ENCODE measurements at regions of chr3 and their contacts with region 1.

Region 1: DNA sequence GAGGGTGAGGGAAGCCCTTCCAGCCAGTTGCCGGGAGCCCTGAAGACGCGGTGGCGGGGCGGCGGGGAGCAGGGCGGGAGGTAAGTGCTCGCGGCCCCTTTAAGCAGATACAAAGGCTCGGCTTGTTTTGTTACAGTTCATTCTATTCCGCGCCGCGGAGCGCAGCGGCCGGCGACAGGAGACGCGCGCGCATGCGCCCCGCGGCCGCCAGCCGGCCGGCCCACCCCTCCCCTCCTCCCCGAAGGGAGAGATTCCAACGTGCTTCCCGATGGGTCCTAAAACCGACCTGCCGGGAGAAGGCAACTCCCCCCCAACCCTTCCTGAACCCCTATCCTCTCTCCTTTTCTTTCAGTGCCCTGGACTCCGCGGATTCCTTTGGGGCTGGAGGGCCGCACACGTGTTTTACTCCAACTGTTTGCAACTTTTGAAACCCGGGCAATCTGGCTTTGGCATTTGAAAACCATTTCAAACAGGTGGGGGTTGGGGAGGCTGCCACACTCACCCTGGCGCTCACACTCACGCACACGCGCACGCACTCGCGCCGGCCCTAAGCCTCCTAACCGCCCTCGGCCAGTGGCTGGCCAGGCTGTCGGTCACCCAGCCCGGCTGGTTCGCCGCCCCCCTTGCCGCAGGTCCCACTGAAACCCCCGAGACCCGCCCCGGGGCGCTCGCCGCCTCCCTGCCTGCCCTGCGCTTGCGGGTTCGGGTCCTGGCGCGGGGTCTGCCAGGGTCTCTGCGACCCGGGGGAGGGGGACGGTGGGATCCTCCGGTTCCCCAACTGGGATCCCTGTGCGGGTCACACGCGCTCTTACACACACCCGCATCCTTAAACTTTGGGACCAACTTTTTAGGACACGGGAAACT is at the start of gene MAGI1:
- DNase-seq: peak; percentile 91
- ATAC-seq: peak; percentile 91 to 92
- total RNA-seq, gene MAGI1: 27.7 to 30.0 TPM

Region 2: DNA sequence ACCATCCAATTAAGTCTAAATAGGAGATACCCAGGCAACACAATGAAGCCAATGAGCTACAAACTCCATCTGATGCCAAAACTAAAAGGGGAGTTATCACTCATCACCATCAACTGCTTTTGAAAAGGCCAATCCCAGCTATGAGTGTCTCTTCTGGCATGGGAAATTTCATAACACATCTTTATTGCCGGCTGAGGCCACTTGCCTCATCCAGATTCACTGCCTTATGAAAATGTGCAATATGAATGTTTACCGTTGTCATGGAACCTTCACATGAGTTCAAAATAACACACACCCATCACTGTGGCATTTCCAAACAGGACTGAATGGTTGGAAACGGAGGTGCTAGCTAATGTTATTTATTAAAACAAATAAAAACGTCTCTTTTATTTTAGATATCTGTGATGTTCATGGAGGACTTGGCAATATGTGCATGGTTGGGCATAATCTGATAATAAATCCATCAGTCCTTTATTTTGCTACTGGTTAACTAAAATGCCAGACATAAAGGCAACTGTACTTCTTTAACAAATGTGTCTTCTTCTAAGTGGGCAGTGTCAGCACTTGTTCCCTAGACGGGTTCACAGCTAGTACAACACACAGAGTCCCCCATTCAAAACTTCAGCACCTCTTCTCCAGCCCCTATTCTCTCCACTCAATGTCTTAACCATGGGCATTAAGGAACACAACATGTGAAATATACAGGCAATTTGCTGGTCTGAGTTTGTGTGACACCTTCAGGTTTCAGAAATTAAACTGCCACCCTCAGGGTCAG is 144.1 kb before region 1 on chr3:
- intact Hi-C with region 1: loop called in 1 of 2 experiments (anchors 10 kb)
- DNase-seq: no peak
- ATAC-seq: peak; percentile 72 to 89

Region 3: GRCh38 chr3:65963787-65964677 is 74.9 kb before region 1 on chr3:
- intact Hi-C with region 1: loop called in 1 of 2 experiments (anchors 10 kb)
- DNase-seq: no peak
- ATAC-seq: peak in 1 of 2 donors; percentile 82